KBM-7 (cell line): ENCODE measurements at regions of chr20 and their contacts with region 1.

Region 1: DNA sequence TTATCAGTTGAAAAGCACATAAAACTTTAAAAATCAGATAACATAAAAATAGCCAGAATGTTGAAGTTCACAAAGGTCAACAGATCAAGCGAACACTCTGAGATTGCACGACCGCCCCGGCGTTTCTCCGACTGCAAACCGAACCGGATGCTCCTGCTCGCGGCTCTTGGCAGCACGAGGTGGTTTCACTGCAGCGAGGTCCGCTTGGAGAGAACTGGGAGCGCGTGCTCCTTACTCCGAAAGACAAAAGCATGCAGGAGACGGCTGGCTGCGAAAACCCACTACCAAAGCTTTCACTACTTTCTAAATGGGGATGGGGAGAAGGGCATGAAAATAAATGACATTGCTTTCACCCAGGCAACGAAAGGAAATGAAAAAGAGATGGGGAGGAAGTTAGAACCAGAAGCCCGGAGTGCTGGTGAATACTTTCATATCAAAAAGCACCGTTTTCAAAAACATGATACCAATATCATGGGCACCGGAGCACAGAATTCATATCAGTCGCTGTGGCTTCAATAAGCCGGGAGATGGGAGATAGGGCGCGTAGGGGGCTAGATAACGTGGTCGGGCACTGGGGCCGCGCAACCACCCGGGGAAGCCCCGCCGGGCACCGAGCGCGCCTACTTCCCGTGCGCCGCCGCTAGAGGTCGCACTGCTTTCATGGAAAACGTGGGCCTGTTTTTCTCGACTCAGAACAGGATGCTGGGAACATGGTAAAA is 8.3 kb upstream of the ANKRD60 start:
- DNase-seq: peak; percentile 83

Region 2: GRCh38 chr20:58839474-58839874 is 602.7 kb after region 1 on chr20:
- in situ Hi-C with region 1: loop called (anchors 25 kb)
- DNase-seq: peak; percentile 61